Activated CD4-positive, alpha-beta memory T cell treated with anti-CD3 and anti-CD28 coated beads for 36 hours (primary cell): ENCODE measurements at regions of chr17 and their contacts with region 1.

Region 1: GRCh38 chr17:66715745-66716156 is 119.2 kb upstream of the CACNG5 start:
- DNase-seq: no peak
- H3K4me3 Mint-ChIP-seq: no peak overlapping the region
- H3K27ac Mint-ChIP-seq: no peak overlapping the region
- H3K4me1 Mint-ChIP-seq: peaks cover 23% of the 10 kb centered on the region
- H3K27me3 Mint-ChIP-seq: no peaks in the 10 kb centered on the region

Region 2: DNA sequence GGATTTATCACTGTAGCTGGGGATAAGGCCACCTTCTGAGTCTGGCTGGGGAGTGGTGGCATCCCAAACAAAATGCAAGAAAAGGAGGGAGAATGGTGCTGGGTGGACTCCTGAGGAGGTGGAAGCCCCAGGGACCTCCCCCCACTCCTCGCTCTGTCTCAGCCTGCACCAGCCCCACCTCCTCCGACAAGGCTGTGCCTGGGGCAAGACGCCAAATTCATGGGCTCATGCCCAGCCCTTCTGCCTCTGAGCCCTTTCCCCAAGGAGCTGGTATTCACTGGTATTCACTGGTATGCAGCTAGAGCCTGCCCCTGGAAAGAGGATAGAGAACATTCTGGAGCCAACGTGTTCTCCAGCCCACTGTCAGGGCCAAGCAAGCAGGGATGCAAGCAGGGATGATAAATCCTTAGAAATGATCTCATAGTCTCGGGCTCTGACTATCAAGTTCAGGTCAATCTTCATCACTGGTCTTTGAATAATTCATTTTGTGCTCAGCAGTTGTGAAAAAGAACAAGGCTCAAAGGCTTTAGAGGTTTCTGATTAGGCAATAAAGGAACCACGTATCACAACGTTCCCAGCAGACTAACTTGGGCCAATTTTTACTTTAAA is 176.4 kb after region 1 on chr17:
- CTCF ChIA-PET with region 1: no interaction called
- POLR2A ChIA-PET with region 1: no interaction called
- intact Hi-C with region 1: loop called (anchors 5 kb)
- DNase-seq: no peak
- H3K4me3 Mint-ChIP-seq: no peak overlapping the region
- H3K27ac Mint-ChIP-seq: no peak overlapping the region
- H3K4me1 Mint-ChIP-seq: no peaks in the 10 kb centered on the region
- H3K27me3 Mint-ChIP-seq: peaks cover 2% of the 10 kb centered on the region

Region 3: GRCh38 chr17:66906321-66907278 is 190.8 kb after region 1 on chr17:
- CTCF ChIA-PET with region 1: interaction called, 4 read pairs
- POLR2A ChIA-PET with region 1: no interaction called
- intact Hi-C with region 1: loop called (anchors 2 kb)
- DNase-seq: peak; percentile 79
- H3K4me3 Mint-ChIP-seq: no peak overlapping the region
- H3K27ac Mint-ChIP-seq: no peak overlapping the region
- H3K4me1 Mint-ChIP-seq: peaks cover 4% of the 10 kb centered on the region
- H3K27me3 Mint-ChIP-seq: peaks cover 2% of the 10 kb centered on the region